Common myeloid progenitor, CD34-positive (primary cell): ENCODE measurements at regions of chr16 and their contacts with region 1.

Region 1: DNA sequence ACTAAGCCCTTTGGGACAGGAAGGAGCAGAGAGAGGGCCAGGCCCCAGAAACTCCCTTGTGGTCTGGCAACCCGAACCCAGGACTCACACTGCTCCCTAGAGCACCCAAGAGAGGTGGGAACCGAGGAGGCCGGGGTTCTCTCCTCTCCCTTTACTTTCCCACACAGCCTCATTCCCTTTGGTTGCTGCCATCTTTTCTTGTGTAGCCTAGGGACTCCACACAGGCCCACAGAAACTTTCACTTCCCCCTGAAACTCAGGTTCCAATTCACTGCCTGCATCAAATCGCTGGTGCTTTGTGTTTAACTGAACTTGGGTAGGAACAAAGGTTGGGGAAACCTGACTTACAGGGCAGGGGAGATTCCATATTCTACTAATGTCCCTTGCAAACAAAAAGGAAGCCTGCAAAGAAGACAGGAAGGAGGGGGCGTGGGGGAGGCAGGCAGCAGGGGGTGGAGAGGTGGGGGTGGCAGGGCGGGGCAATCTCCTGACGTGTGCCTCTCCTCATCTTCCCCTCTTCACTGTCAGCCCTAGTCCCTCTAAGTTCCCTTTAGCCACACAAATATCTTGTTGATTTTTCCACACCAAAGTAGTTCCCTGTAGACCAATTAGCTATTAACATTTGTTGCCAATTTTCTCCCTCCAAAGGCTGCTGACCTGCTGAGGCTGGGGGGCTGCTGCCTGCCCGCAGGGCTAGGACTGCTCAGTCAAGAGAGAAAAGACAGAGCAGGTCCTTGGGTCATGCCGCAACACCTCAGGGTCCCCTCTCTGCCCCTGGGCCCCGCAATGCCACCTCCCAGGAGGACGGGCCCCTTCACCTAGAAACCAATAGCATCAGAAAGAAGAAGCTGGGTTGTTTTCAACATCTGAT is 8.0 kb downstream of the ST3GAL2 start:
- DNase-seq: peak; percentile 75 to 95 (median 95)
- H3K4me3 ChIP-seq: peak overlapping the region in 4 of 7 experiments; percentile 29 to 72 (median 48)
- H3K27ac ChIP-seq: peak overlapping the region; percentile 81 to 88
- H3K4me1 ChIP-seq: peaks cover 23 to 83% (median 69%) of the 10 kb centered on the region in 4 experiments
- H3K27me3 ChIP-seq: no peaks in the 10 kb centered on the region

Region 2: DNA sequence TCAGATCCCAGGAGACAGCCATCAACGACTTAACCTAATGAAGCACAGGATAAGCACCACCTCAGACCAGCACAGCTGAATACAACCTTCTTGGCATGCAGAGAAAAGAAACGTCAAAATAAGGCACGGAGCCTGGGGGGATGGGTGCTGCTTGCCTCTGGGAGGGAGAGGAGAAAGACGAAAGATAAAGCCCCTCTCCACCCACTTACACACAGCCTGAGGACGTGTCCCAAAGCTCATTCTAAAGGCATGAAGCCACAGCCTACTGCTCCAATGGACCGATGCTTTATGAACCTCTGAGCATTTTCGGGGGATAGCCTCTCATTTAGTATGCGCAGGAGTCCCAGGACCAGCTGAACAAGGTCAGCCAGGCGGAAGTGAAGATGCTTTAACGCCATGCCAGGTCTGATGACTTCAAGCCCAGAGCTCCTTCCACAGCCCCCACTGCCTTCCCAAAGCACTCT is 23.1 kb before region 1 on chr16:
- CTCF ChIA-PET with region 1: interaction called, 15 read pairs
- POLR2A ChIA-PET with region 1: interaction called, 4 read pairs
- DNase-seq: no peak
- H3K4me3 ChIP-seq: no peak overlapping the region
- H3K27ac ChIP-seq: no peak overlapping the region
- H3K4me1 ChIP-seq: peaks cover 5 to 51% (median 32%) of the 10 kb centered on the region in 4 experiments
- H3K27me3 ChIP-seq: no peaks in the 10 kb centered on the region

Region 3: GRCh38 chr16:70484867-70485266 is 54.0 kb after region 1 on chr16:
- CTCF ChIA-PET with region 1: no interaction called
- POLR2A ChIA-PET with region 1: no interaction called
- DNase-seq: no peak
- H3K4me3 ChIP-seq: no peak overlapping the region
- H3K27ac ChIP-seq: no peak overlapping the region
- H3K4me1 ChIP-seq: no peaks in the 10 kb centered on the region
- H3K27me3 ChIP-seq: no peaks in the 10 kb centered on the region

Region 4: DNA sequence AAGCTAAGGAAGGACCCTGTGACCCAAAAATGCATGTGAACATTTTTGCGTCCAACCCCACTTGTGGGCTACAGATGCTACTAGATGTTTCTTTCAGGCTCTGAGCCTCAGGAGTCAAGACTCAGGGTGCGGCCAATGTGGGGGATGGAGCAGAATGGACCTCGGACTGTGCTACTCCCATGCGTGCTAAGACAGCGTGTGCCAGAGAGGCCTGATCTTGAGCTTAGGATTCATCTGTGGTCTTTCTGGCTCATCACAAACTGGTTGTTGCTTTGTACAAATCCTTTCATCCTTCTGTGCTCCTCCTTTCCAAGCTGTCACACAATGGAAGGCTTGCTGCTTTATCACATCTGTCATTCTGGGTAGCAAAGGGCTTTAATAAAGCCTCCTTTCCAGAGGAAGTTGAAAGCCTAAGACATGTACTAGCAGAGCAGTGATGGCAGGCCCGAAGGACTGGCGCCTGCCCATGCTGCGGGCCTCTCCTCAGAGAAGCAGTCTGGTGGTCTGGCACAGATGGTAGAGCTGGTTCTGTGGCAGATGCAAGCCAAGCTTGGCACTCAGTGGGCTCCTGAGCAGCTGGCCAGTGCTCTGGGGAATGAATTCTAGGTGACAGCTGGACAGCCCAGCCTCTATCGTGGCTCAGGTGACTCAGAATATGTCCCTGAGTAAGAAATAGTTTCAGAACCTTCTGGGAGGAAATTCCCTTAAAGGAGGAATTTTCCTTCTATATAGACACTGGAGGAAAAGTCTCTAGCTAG is 64.7 kb after region 1 on chr16:
- CTCF ChIA-PET with region 1: no interaction called
- POLR2A ChIA-PET with region 1: no interaction called
- DNase-seq: no peak
- H3K4me3 ChIP-seq: no peak overlapping the region
- H3K27ac ChIP-seq: no peak overlapping the region
- H3K4me1 ChIP-seq: peaks cover 0 to 5% (median under 1%) of the 10 kb centered on the region in 4 experiments
- H3K27me3 ChIP-seq: no peaks in the 10 kb centered on the region